PC-9 (cell line): ENCODE measurements at regions of chr2 and their contacts with region 1.

Region 1: GRCh38 chr2:24084386-24085361 is at the start of gene TP53I3:
- DNase-seq: peak; percentile 75 to 91
- H3K4me3 ChIP-seq: peak within 1 kb of the TSS; percentile 71
- H3K27ac ChIP-seq: peak within 1 kb of the TSS; percentile 61
- H3K4me1 ChIP-seq: peaks cover 18% of the 10 kb centered on the region
- H3K27me3 ChIP-seq: no peaks in the 10 kb centered on the region
- CTCF ChIP-seq: peak; percentile 96
- total RNA-seq, gene TP53I3: 21.4 and 22.9 TPM in 2 replicates

Region 2: DNA sequence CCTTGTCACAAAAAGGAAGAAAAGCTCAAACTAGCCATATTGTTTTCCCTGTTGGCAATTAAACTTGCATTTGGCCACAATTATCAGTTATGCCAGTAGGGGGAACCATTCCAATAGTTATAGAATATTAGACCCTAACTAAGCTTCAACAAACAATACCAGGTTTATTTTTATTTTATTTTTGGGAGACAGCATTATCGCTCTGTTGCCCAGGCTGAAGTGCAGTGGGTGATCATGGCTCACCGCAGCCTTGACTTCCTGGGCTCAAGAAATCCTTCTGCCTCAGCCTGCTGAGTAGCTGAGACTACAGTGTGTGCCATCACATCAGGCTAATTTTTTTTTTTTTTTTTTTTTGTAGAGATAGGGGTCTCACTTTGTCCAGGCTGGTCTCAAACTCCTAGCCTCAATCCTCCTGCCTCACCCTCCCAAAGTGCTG is 259.9 kb before region 1 on chr2:
- CTCF ChIA-PET with region 1: interaction called, 6 read pairs
- POLR2A ChIA-PET with region 1: no interaction called
- intact Hi-C with region 1: loop called (anchors 1 kb)
- DNase-seq: peak; percentile 17 to 41
- H3K4me3 ChIP-seq: no peak overlapping the region
- H3K27ac ChIP-seq: no peak overlapping the region
- H3K4me1 ChIP-seq: peaks cover 18% of the 10 kb centered on the region
- H3K27me3 ChIP-seq: no peaks in the 10 kb centered on the region
- CTCF ChIP-seq: peak; percentile 88

Region 3: DNA sequence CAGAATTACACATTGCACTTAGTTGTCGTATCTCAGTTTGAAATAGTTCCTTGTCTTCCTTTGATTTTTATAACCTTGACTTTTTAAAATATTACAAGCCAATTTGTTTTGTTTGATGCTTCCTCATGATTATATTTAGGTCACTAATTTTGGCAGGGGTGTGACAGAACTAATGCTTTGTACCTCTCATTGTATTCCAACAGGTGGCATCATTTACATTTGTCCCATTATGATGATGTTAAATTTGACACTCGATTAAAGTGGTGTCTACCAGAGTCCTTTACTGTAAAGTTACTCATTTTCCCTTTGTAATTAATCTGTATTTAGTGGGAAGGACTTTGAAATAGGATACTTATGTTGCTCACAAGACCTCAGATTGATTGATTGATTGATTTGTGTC is 96.3 kb before region 1 on chr2:
- CTCF ChIA-PET with region 1: no interaction called
- POLR2A ChIA-PET with region 1: interaction called, 3 read pairs
- intact Hi-C with region 1: loop called (anchors 1 kb)
- DNase-seq: no peak
- H3K4me3 ChIP-seq: no peak overlapping the region
- H3K27ac ChIP-seq: no peak overlapping the region
- H3K4me1 ChIP-seq: no peaks in the 10 kb centered on the region
- H3K27me3 ChIP-seq: no peaks in the 10 kb centered on the region
- CTCF ChIP-seq: peak; percentile 73

Region 4: GRCh38 chr2:24123195-24123921 is 38.7 kb after region 1 on chr2 and contains the starts of genes FAM228B and PFN4:
- CTCF ChIA-PET with region 1: interaction called, 3 read pairs
- POLR2A ChIA-PET with region 1: no interaction called
- intact Hi-C with region 1: loop called (anchors 1 kb)
- DNase-seq: peak; percentile 62 to 85
- H3K4me3 ChIP-seq: peak within 1 kb of the TSS; percentile 89
- H3K27ac ChIP-seq: peak within 1 kb of the TSS; percentile 30
- H3K4me1 ChIP-seq: peaks cover 8% of the 10 kb centered on the region; the same call in 1 of the 2 replicates
- H3K27me3 ChIP-seq: no peaks in the 10 kb centered on the region
- CTCF ChIP-seq: no peak
- total RNA-seq, gene FAM228B: 16.8 and 20.7 TPM in 2 replicates
- total RNA-seq, gene PFN4: 1.2 and 2.6 TPM in 2 replicates

Region 5: DNA sequence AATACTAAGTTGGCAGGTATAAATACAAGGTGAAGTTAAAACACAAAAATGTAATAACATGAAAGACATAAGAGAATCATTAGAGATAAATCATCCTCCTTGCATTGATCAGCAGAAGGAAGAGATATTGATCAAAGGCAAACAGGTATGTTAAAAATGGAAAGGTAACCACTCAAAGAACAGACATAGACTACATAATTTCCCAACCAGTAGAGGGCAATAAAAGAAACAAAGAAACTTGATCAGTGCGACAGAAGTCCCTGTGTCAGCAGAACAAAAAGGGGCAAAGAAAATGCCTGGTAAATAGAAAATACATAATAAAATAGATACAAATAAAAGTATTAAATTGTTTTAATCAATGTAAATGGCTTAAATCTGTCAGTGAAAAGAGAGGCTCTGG is 143.8 kb after region 1 on chr2:
- CTCF ChIA-PET with region 1: no interaction called
- POLR2A ChIA-PET with region 1: no interaction called
- intact Hi-C with region 1: loop called (anchors 2 kb)
- DNase-seq: peak in 1 of 2 experiments; percentile 40
- H3K4me3 ChIP-seq: no peak overlapping the region
- H3K27ac ChIP-seq: no peak overlapping the region
- H3K4me1 ChIP-seq: no peaks in the 10 kb centered on the region
- H3K27me3 ChIP-seq: no peaks in the 10 kb centered on the region
- CTCF ChIP-seq: peak; percentile 62

Region 6: DNA sequence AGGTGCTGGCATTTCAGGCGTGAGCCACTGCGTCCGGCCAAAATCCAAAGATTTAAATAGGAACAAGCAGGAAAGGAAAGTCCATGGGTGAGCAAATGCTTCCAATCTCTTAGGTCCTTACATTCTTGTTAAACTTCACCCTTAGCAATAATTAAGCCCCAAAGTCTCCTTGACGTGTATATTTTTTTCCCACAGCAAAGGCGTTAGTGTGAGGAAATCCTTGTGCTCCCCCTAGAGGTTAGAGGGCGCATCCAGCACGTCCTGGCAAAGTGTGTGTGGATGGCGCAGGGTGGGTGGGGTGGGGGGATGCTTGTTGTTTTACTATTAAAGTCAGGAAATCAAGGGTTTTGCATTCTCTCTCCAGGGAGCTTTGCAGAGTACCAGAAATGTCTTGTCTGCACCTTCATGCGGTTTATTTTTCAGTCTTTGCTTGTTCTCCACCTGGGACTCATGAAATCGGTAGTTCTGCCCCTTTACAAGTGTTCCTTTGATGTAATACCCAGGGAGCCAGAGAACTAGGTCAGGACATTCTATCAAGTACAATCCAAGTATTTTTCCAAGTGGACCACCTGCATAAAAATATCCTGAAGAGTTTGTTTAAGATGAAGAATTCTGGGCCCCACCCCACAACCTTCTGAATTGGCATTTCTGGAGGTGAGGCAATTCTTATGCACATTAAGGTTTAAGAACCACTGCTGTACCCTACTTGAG is 297.8 kb after region 1 on chr2:
- CTCF ChIA-PET with region 1: no interaction called
- POLR2A ChIA-PET with region 1: no interaction called
- intact Hi-C with region 1: loop called (anchors 5 kb)
- DNase-seq: peak; percentile 57 to 58
- H3K4me3 ChIP-seq: no peak overlapping the region
- H3K27ac ChIP-seq: no peak overlapping the region
- H3K4me1 ChIP-seq: no peaks in the 10 kb centered on the region
- H3K27me3 ChIP-seq: no peaks in the 10 kb centered on the region
- CTCF ChIP-seq: peak; percentile 72

Region 7: DNA sequence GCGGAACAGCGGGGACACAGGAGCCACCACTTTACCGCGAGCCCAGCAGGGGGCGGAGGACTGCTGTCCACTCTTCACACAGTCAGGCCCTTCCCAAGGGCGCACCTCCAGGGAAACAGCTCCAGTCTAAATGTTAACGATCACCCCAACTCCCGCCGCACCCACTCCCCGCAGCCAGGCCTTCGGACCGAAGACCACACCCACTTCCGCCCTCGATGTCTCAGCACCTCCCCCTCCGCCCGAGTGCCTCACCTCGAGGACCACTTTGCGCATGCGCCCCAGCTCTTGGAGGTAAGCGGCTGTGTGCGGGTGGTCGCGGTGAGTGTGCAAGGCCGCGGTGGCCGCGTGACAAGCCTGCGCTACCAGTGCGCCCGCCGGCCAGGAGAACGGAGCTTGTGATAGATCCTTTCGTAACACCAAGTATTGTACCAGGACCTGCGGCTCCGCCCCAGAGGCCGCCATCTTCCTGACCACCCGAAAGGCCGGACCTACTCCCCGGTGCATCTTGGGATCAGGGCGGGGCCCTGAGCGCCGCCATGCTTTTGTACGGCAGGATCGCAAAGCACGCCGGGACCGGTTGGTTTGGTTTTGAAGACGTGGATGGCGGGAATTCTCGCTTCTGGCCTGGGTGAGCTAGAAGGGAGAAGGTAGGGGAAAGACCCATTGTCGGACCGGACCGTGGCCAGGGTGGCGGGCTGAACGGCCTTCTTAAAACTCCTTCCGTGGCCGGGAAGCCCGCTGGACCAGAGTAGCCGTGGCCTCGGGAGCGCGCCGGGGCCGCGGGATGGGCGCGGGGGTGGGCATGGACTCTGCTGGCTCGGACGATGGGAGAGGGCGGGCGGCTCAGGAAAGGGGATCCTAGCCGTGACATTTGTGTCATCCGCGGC is 708.4 kb after region 1 on chr2 and contains the starts of genes CENPO and PTRHD1:
- CTCF ChIA-PET with region 1: no interaction called
- POLR2A ChIA-PET with region 1: no interaction called
- intact Hi-C with region 1: loop called (anchors 5 kb)
- DNase-seq: peak; percentile 93 to 96
- H3K4me3 ChIP-seq: peak within 1 kb of the TSS; percentile 71
- H3K27ac ChIP-seq: peak within 1 kb of the TSS; percentile 89
- H3K4me1 ChIP-seq: peaks cover 31% of the 10 kb centered on the region
- H3K27me3 ChIP-seq: no peaks in the 10 kb centered on the region
- CTCF ChIP-seq: peak; percentile 82
- total RNA-seq, gene CENPO: 21.3 and 33.0 TPM in 2 replicates
- total RNA-seq, gene PTRHD1: 23.6 and 28.7 TPM in 2 replicates